ENCODE measurements at regions of chr10 and their contacts with region 1.

Region 1: GRCh38 chr10:34241226-34242000 is 573.7 kb downstream of the PARD3 start:
- DNase-seq: no peak
- H3K4me3 ChIP-seq: no peak overlapping the region
- H3K27ac ChIP-seq: no peak overlapping the region
- H3K4me1 ChIP-seq: no peaks in the 10 kb centered on the region
- H3K27me3 ChIP-seq: no peaks in the 10 kb centered on the region
- CTCF ChIP-seq: no peak
- POLR2A ChIP-seq: no peak

Region 2: GRCh38 chr10:34222359-34222758 is 19.1 kb before region 1 on chr10:
- intact Hi-C with region 1: no loop called
- DNase-seq: no peak
- H3K4me3 ChIP-seq: no peak overlapping the region
- H3K27ac ChIP-seq: no peak overlapping the region
- H3K4me1 ChIP-seq: no peaks in the 10 kb centered on the region
- H3K27me3 ChIP-seq: no peaks in the 10 kb centered on the region
- CTCF ChIP-seq: no peak
- POLR2A ChIP-seq: no peak

Region 3: GRCh38 chr10:34473567-34474391 is 232.4 kb after region 1 on chr10:
- intact Hi-C with region 1: loop called (anchors 5 kb)
- DNase-seq: no peak
- H3K4me3 ChIP-seq: no peak overlapping the region
- H3K27ac ChIP-seq: no peak overlapping the region
- H3K4me1 ChIP-seq: no peaks in the 10 kb centered on the region
- H3K27me3 ChIP-seq: no peaks in the 10 kb centered on the region
- CTCF ChIP-seq: no peak
- POLR2A ChIP-seq: no peak